ENCODE measurements at regions of chr2 and their contacts with region 1.

Region 1: GRCh38 chr2:52934354-52934898 is 833.2 kb upstream of the CHAC2 start:
- DNase-seq: peak; percentile 25
- H3K4me3 Mint-ChIP-seq: peak overlapping the region; percentile 58
- H3K27ac Mint-ChIP-seq: peak overlapping the region; percentile 100
- H3K4me1 Mint-ChIP-seq: peaks cover 41% of the 10 kb centered on the region
- H3K27me3 Mint-ChIP-seq: no peaks in the 10 kb centered on the region
- CTCF ChIP-seq: no peak

Region 2: DNA sequence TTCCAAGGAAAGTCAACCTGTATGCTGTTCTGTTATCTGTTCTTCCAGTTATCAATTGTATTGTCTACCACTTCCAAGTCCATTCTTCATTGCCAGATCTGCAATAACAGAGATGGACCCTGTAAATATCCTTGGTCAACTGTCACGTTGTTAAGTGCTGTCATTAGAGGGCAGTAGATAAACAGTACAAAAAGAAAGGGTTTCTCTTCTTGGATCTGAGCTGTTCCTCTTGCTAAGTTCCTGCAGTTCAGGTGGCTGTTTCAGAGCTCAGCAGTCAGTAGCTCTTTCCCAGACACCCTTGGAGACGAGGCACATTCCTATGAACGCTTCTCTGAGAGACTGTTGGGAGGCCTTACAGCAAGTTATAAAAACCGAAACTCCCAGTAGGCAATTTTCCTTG is 124.0 kb before region 1 on chr2:
- CTCF ChIA-PET with region 1: interaction called, 5 read pairs
- intact Hi-C with region 1: loop called (anchors 1 kb)
- DNase-seq: peak; percentile 9
- H3K4me3 Mint-ChIP-seq: no peak overlapping the region
- H3K27ac Mint-ChIP-seq: peak overlapping the region; percentile 14
- H3K4me1 Mint-ChIP-seq: peaks cover 12% of the 10 kb centered on the region
- H3K27me3 Mint-ChIP-seq: no peaks in the 10 kb centered on the region
- CTCF ChIP-seq: peak; percentile 36

Region 3: DNA sequence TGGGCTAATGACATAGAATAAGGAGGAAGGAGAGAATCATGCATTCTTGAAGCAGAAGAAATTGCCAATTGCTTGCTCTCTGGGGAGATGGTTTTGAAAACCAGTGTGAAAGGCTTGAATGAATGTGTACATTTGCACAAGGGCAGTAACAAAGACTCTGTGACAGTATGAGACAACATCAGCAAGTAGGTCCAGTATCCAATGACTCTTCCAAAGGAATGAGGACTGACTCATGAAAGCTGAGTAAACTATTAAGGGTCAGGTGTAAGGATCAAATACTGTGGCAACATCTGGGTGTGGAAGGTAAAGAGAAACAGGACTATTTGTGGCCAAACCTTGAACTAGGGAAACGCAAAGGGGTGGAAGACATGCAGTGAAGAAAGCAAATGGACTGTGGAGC is 52.8 kb before region 1 on chr2:
- CTCF ChIA-PET with region 1: no interaction called
- intact Hi-C with region 1: loop called (anchors 5 kb)
- DNase-seq: peak; percentile 6
- H3K4me3 Mint-ChIP-seq: no peak overlapping the region
- H3K27ac Mint-ChIP-seq: no peak overlapping the region
- H3K4me1 Mint-ChIP-seq: peaks cover 21% of the 10 kb centered on the region
- H3K27me3 Mint-ChIP-seq: no peaks in the 10 kb centered on the region
- CTCF ChIP-seq: no peak

Region 4: GRCh38 chr2:52904355-52904891 is 30.0 kb before region 1 on chr2:
- CTCF ChIA-PET with region 1: interaction called, 3 read pairs
- intact Hi-C with region 1: loop called (anchors 1 kb)
- DNase-seq: peak; percentile 18
- H3K4me3 Mint-ChIP-seq: no peak overlapping the region
- H3K27ac Mint-ChIP-seq: peak overlapping the region; percentile 75
- H3K4me1 Mint-ChIP-seq: peaks cover 35% of the 10 kb centered on the region
- H3K27me3 Mint-ChIP-seq: no peaks in the 10 kb centered on the region
- CTCF ChIP-seq: no peak

Region 5: GRCh38 chr2:52976253-52976949 is 42.0 kb after region 1 on chr2:
- CTCF ChIA-PET with region 1: no interaction called
- intact Hi-C with region 1: loop called (anchors 2 kb)
- DNase-seq: peak; percentile 55
- H3K4me3 Mint-ChIP-seq: no peak overlapping the region
- H3K27ac Mint-ChIP-seq: no peak overlapping the region
- H3K4me1 Mint-ChIP-seq: no peaks in the 10 kb centered on the region
- H3K27me3 Mint-ChIP-seq: no peaks in the 10 kb centered on the region
- CTCF ChIP-seq: peak; percentile 43

Region 6: GRCh38 chr2:53098696-53099078 is 164.3 kb after region 1 on chr2:
- CTCF ChIA-PET with region 1: no interaction called
- intact Hi-C with region 1: loop called (anchors 10 kb)
- DNase-seq: no peak
- H3K4me3 Mint-ChIP-seq: peak overlapping the region; percentile 59
- H3K27ac Mint-ChIP-seq: peak overlapping the region; percentile 88
- H3K4me1 Mint-ChIP-seq: peaks cover 53% of the 10 kb centered on the region
- H3K27me3 Mint-ChIP-seq: no peaks in the 10 kb centered on the region
- CTCF ChIP-seq: no peak

Region 7: DNA sequence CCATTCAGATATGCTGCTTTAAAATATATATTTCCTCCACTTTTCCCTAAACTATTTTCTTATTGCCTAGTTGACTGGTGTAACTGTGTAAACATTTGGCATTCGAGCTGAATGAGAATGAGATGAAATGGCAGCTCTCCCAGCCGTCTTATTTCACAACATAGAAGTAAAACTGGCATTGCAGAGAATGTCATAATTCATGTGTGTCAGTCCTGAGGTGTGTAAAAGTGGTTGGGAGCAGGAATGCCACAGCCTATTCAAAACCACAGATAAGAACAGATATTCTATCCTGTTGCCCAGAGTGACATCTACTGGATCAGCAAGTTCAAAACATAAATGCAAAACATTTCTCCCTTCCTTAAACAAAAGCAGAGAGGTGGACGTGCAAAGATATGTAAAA is 267.6 kb after region 1 on chr2:
- CTCF ChIA-PET with region 1: no interaction called
- intact Hi-C with region 1: loop called (anchors 5 kb)
- DNase-seq: peak; percentile 56
- H3K4me3 Mint-ChIP-seq: no peak overlapping the region
- H3K27ac Mint-ChIP-seq: peak overlapping the region; percentile 54
- H3K4me1 Mint-ChIP-seq: peaks cover 9% of the 10 kb centered on the region
- H3K27me3 Mint-ChIP-seq: no peaks in the 10 kb centered on the region
- CTCF ChIP-seq: no peak